OCI-LY7 (cell line): ENCODE measurements at regions of chr13 and their contacts with region 1.

Region 1: GRCh38 chr13:79398915-79399314 is 7.1 kb downstream of the RBM26 start:
- DNase-seq: no peak
- H3K4me3 ChIP-seq: no peak overlapping the region
- H3K27ac ChIP-seq: no peak overlapping the region
- H3K4me1 ChIP-seq: peaks cover 37% of the 10 kb centered on the region
- CTCF ChIP-seq: no peak

Region 2: GRCh38 chr13:79385694-79386093 is 13.2 kb before region 1 on chr13:
- CTCF ChIA-PET with region 1: no interaction called
- POLR2A ChIA-PET with region 1: interaction called, 12 read pairs
- intact Hi-C with region 1: no loop called
- DNase-seq: no peak
- H3K4me3 ChIP-seq: no peak overlapping the region
- H3K27ac ChIP-seq: no peak overlapping the region
- H3K4me1 ChIP-seq: peaks cover 52% of the 10 kb centered on the region
- CTCF ChIP-seq: no peak

Region 3: GRCh38 chr13:79413521-79413920 is 14.6 kb after region 1 on chr13:
- CTCF ChIA-PET with region 1: no interaction called
- POLR2A ChIA-PET with region 1: no interaction called
- intact Hi-C with region 1: no loop called
- DNase-seq: no peak
- H3K4me3 ChIP-seq: no peak overlapping the region
- H3K27ac ChIP-seq: no peak overlapping the region
- H3K4me1 ChIP-seq: no peaks in the 10 kb centered on the region
- CTCF ChIP-seq: no peak